GM12878 (cell line): ENCODE measurements at regions of chr7 and their contacts with region 1.

Region 1: GRCh38 chr7:113118074-113118959 is at the start of gene SMIM30:
- DNase-seq: peak; percentile 61
- ATAC-seq: peak; percentile 99
- H3K4me3 ChIP-seq: peak within 1 kb of the TSS; percentile 79
- H3K27ac ChIP-seq: peak within 1 kb of the TSS; percentile 55
- H3K4me1 ChIP-seq: peaks cover 3% of the 10 kb centered on the region; the same call in 1 of the 2 replicates
- H3K27me3 ChIP-seq: no peaks in the 10 kb centered on the region
- CTCF ChIP-seq: no peak
- EP300 ChIP-seq: no peak
- POLR2A ChIP-seq: peak; percentile 73
- RAD21 ChIP-seq: no peak
- polyA plus RNA-seq, gene SMIM30: 197 to 258 TPM

Region 2: GRCh38 chr7:112939574-112940314 is 178.6 kb before region 1 on chr7:
- CTCF ChIA-PET with region 1: no interaction called
- POLR2A ChIA-PET with region 1: interaction called, 5 read pairs
- RAD21 ChIA-PET with region 1: no interaction called
- SMC1A ChIA-PET with region 1: interaction called, 5 read pairs
- in situ Hi-C with region 1: no loop called
- intact Hi-C with region 1: loop called (anchors 10 kb)
- DNase-seq: peak; percentile 97
- ATAC-seq: peak; percentile 98
- H3K4me3 ChIP-seq: peak overlapping the region; percentile 99
- H3K27ac ChIP-seq: peak overlapping the region; percentile 63
- H3K4me1 ChIP-seq: peaks cover 8% of the 10 kb centered on the region
- H3K27me3 ChIP-seq: no peaks in the 10 kb centered on the region
- CTCF ChIP-seq: no peak
- EP300 ChIP-seq: no peak
- POLR2A ChIP-seq: peak; percentile 77
- RAD21 ChIP-seq: no peak

Region 3: DNA sequence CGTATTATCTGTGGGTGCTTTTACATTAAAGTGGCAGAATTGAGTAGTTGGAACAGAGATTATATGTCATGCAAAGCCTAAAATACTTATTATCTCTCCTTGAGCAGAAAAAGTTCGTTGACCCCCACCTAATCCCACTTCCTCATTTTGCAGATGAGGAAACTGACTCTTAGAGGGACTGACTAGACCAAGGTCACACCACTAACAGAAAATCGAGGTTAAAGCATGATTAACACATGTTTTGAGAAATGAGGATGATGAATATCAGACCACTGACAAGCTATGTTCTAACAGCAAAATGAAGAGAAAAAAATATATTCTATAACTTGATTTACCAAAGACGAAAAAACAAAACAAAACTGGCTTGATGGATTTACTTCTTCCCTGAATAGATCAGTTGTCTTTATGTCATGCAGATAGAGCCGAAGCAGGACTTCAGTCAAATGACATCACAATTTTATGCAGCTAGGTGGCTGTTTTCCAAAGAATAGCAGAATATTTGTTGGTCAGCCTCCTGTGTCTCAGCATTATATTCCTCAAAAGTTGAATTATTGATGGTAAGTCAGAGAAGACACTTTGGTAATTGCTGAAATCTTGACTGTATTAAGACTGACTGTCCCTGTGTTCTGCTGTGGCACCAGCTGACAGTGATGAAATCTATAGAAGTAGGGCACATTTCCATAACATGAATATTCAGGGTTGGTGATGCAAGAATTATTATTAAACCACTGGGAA is 24.2 kb after region 1 on chr7:
- CTCF ChIA-PET with region 1: interaction called, 5 read pairs
- POLR2A ChIA-PET with region 1: interaction called, 5 read pairs
- RAD21 ChIA-PET with region 1: interaction called, 3 read pairs
- SMC1A ChIA-PET with region 1: interaction called, 12 read pairs
- in situ Hi-C with region 1: no loop called
- intact Hi-C with region 1: no loop called
- DNase-seq: peak; percentile 20
- ATAC-seq: peak; percentile 83
- H3K4me3 ChIP-seq: no peak overlapping the region
- H3K27ac ChIP-seq: no peak overlapping the region
- H3K4me1 ChIP-seq: peaks cover 6% of the 10 kb centered on the region; the same call in 1 of the 2 replicates
- H3K27me3 ChIP-seq: no peaks in the 10 kb centered on the region
- CTCF ChIP-seq: no peak
- EP300 ChIP-seq: peak; percentile 50 to 60; a peak in 2 of 4 replicates
- POLR2A ChIP-seq: no peak
- RAD21 ChIP-seq: no peak

Region 4: DNA sequence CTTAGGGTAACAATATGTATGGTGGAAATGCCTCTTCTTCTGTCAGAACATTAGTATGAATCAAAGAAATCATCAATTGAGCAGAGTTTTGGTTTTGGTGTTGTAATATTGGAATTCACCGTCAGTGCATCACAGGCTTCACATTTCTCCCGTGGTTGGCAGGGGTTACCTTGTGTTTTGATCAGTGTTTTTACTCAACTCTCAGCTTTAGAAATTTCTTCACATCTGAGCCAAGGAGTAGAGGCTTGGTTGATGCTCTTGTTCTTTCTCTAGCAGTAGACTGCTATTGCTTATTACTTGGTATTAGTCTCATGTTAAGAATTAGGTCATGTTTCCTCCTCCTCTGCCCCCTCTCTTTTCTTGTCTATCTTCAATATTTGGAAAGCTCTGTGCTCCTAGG is 188.8 kb after region 1 on chr7:
- CTCF ChIA-PET with region 1: no interaction called
- POLR2A ChIA-PET with region 1: no interaction called
- RAD21 ChIA-PET with region 1: no interaction called
- SMC1A ChIA-PET with region 1: no interaction called
- in situ Hi-C with region 1: no loop called
- intact Hi-C with region 1: no loop called
- DNase-seq: no peak
- ATAC-seq: peak; percentile 55
- H3K4me3 ChIP-seq: no peak overlapping the region
- H3K27ac ChIP-seq: no peak overlapping the region
- H3K4me1 ChIP-seq: no peaks in the 10 kb centered on the region
- H3K27me3 ChIP-seq: no peaks in the 10 kb centered on the region
- CTCF ChIP-seq: no peak
- EP300 ChIP-seq: no peak
- POLR2A ChIP-seq: no peak
- RAD21 ChIP-seq: no peak